Activated CD8-positive, alpha-beta T cell treated with anti-CD3 and anti-CD28 coated beads for 36 hours (primary cell): ENCODE measurements at regions of chr5 and their contacts with region 1.

Region 1: DNA sequence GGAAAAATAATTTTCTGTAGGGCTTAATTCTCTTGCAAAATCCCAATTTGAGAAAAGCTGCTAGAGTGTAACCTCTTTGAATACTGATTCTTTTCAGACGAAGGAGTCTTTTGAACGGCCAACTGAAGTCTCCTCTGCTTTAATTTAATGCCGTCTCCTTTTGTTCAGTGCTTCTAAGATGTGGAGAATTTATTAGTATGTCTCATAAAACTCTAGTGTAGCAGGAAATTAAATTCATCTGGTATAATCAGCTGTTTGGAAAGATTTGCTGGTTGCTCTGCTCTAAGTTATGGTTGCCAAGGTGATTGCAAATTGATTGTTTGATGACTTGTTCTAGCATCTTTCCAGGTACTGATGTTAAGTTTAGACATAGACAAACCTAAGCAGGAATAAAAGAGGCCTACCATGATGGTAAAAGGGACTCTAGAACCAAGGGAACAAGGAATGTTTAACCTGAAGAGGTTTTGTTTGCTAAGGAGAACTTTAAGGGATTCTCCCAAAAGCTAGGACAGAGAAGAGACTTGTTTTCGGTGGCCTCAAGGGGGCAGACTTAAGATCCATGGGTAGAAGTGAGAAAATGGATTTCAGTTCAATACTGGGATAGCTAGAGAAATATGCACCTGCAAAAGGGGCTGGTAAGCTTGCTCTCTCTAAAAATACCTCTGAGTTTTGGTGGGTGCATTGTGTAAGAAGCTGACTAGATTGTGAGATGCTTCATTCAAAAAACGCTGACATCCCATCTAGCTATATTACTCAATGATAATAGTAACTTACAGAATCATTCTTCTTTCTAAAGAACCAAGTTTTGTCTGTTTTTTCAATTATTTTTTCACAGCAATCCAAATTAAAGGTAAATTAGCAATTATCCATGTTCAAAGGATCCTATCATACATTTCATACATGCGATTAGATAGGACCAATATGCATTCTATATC is 5.7 kb upstream of the ADRB2 start:
- DNase-seq: no peak
- ATAC-seq: peak; percentile 53
- H3K4me3 Mint-ChIP-seq: no peak overlapping the region
- H3K27ac Mint-ChIP-seq: no peak overlapping the region
- H3K4me1 Mint-ChIP-seq: peaks cover 4% of the 10 kb centered on the region
- H3K27me3 Mint-ChIP-seq: peaks cover 5% of the 10 kb centered on the region
- CTCF ChIP-seq: peak; percentile 65

Region 2: GRCh38 chr5:148805326-148806290 is 15.1 kb before region 1 on chr5:
- CTCF ChIA-PET with region 1: interaction called, 29 read pairs
- POLR2A ChIA-PET with region 1: interaction called, 5 read pairs
- intact Hi-C with region 1: no loop called
- DNase-seq: peak; percentile 78
- ATAC-seq: peak; percentile 45
- H3K4me3 Mint-ChIP-seq: no peak overlapping the region
- H3K27ac Mint-ChIP-seq: peak overlapping the region; percentile 79
- H3K4me1 Mint-ChIP-seq: peaks cover 65% of the 10 kb centered on the region
- H3K27me3 Mint-ChIP-seq: peaks cover 7% of the 10 kb centered on the region
- CTCF ChIP-seq: no peak

Region 3: DNA sequence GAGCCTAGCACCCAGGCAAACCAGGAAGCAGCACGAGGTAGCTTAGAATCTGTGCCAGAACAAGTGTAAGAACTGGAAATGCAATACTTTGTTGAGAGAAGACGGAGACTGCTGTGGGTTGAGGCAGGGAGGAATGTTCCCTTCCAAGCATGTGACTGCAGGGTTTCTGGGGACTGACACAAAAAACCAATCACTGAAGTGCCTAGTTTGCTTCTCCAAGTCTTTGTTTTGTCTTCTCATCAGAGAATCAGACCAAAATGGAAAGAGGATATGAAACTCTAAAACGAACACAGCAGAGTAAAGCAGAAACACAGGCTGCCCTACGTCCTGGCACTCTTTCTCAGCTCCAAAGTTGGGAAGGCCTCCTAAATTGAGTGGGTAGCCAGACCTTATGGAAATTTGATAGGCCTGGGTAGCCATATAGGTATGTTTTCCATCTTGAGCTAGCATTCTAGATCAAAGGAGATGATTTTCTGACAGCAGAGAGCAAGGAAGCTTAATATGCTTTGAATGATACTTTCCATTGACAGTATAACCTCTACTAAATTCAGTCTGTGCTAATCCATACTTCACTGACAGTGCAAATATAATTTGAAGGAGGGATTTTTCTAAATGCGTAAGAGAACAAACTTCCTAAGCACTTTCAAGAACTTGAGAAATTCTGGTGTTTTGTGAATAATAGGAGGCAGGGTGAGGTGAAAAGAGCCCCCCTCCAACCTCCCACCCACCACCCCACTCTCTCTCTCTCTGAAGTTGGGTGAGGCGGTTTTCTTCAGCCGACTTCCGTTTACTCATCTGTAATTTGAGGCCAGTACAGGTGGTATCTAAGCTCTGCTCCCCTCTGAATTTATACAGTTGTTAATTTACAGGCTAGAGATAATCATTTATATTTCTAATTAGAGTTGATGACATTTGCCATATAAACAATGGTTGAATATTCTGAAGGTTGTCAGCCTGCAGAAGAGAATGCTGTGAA is 11.2 kb after region 1 on chr5:
- CTCF ChIA-PET with region 1: interaction called, 22 read pairs
- POLR2A ChIA-PET with region 1: interaction called, 3 read pairs
- intact Hi-C with region 1: no loop called
- DNase-seq: no peak
- ATAC-seq: no peak
- H3K4me3 Mint-ChIP-seq: peak overlapping the region; percentile 0
- H3K27ac Mint-ChIP-seq: peak overlapping the region; percentile 46
- H3K4me1 Mint-ChIP-seq: peaks cover 51% of the 10 kb centered on the region
- H3K27me3 Mint-ChIP-seq: peaks cover 6% of the 10 kb centered on the region
- CTCF ChIP-seq: no peak